B cell (primary cell): ENCODE measurements at regions of chr14 and their contacts with region 1.

Region 1: GRCh38 chr14:35140718-35141581 is 18.6 kb downstream of the PRORP start:
- DNase-seq: peak; percentile 29
- ATAC-seq: peak; percentile 41
- H3K4me3 ChIP-seq: no peak overlapping the region
- H3K4me3 Mint-ChIP-seq: no peak overlapping the region
- H3K27ac ChIP-seq: no peak overlapping the region
- H3K27ac Mint-ChIP-seq: no peak overlapping the region
- H3K4me1 ChIP-seq: no peaks in the 10 kb centered on the region
- H3K4me1 Mint-ChIP-seq: no peaks in the 10 kb centered on the region
- H3K27me3 ChIP-seq: no peaks in the 10 kb centered on the region
- H3K27me3 Mint-ChIP-seq: no peaks in the 10 kb centered on the region
- CTCF ChIP-seq: peak; percentile 80

Region 2: GRCh38 chr14:35159742-35160409 is 18.9 kb after region 1 on chr14:
- CTCF ChIA-PET with region 1: interaction called, 15 read pairs
- POLR2A ChIA-PET with region 1: no interaction called
- intact Hi-C with region 1: no loop called
- DNase-seq: no peak
- ATAC-seq: no peak
- H3K4me3 ChIP-seq: no peak overlapping the region
- H3K4me3 Mint-ChIP-seq: no peak overlapping the region
- H3K27ac ChIP-seq: no peak overlapping the region
- H3K27ac Mint-ChIP-seq: no peak overlapping the region
- H3K4me1 ChIP-seq: peaks cover 5 to 9% of the 10 kb centered on the region in 2 donors
- H3K4me1 Mint-ChIP-seq: peaks cover 28% of the 10 kb centered on the region
- H3K27me3 ChIP-seq: no peaks in the 10 kb centered on the region
- H3K27me3 Mint-ChIP-seq: no peaks in the 10 kb centered on the region
- CTCF ChIP-seq: no peak

Region 3: DNA sequence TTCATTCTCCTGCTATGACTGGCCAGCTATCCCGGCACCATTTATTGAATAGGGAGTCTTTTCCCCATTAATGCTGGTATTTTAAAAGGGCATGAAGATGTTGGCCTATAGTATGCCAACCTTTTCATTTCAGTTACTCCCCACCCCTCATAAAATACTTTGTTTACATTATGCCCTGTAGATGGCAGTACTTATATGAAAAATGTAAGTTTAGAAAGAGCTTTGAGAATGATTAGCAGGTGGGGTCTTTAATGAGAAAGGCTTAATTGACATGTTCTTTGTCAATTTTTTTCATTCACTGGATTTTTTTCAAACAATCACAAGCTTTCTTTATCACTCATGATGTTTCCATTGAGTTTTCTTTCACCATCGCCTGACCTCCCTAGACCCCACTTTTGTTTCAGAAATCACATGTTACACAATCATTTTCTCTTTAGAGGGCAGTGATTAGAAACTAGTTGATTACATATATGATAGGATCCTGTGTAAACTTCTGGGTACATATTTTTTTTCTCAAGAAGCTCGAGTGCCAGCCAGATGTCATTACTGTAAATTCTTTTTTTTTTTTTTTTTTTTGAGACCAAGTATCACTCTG is 88.6 kb after region 1 on chr14:
- CTCF ChIA-PET with region 1: interaction called, 34 read pairs
- POLR2A ChIA-PET with region 1: no interaction called
- intact Hi-C with region 1: loop called (anchors 1 kb)
- DNase-seq: peak; percentile 57
- ATAC-seq: peak; percentile 36
- H3K4me3 ChIP-seq: no peak overlapping the region
- H3K4me3 Mint-ChIP-seq: no peak overlapping the region
- H3K27ac ChIP-seq: no peak overlapping the region
- H3K27ac Mint-ChIP-seq: no peak overlapping the region
- H3K4me1 ChIP-seq: no peaks in the 10 kb centered on the region
- H3K4me1 Mint-ChIP-seq: no peaks in the 10 kb centered on the region
- H3K27me3 ChIP-seq: no peaks in the 10 kb centered on the region
- H3K27me3 Mint-ChIP-seq: no peaks in the 10 kb centered on the region
- CTCF ChIP-seq: peak; percentile 67

Region 4: DNA sequence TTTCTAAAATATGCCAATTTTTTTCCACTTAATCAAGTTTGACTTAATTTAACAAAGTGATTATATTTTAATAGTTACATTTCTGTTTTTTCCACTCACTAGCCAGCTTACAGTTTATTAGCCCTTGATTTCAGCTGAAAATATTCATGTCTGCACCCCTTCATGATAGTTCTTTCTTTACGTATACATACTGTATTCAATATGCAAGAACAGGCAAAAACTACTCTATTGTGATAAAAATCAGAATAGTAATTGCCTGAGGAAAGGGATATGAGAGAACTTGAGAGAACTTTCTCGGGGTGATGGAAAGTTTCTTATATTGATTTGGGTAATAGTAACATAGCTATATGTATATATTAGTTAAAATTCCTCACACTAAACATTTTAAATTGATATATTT is 133.9 kb after region 1 on chr14:
- CTCF ChIA-PET with region 1: no interaction called
- POLR2A ChIA-PET with region 1: no interaction called
- intact Hi-C with region 1: no loop called
- DNase-seq: no peak
- ATAC-seq: no peak
- H3K4me3 ChIP-seq: no peak overlapping the region
- H3K4me3 Mint-ChIP-seq: no peak overlapping the region
- H3K27ac ChIP-seq: no peak overlapping the region
- H3K27ac Mint-ChIP-seq: no peak overlapping the region
- H3K4me1 ChIP-seq: no peaks in the 10 kb centered on the region
- H3K4me1 Mint-ChIP-seq: no peaks in the 10 kb centered on the region
- H3K27me3 ChIP-seq: no peaks in the 10 kb centered on the region
- H3K27me3 Mint-ChIP-seq: peaks cover 3% of the 10 kb centered on the region
- CTCF ChIP-seq: no peak

Region 5: GRCh38 chr14:35365130-35366055 is 224.4 kb after region 1 on chr14:
- CTCF ChIA-PET with region 1: no interaction called
- POLR2A ChIA-PET with region 1: no interaction called
- intact Hi-C with region 1: no loop called
- DNase-seq: no peak
- ATAC-seq: no peak
- H3K4me3 ChIP-seq: no peak overlapping the region
- H3K4me3 Mint-ChIP-seq: no peak overlapping the region
- H3K27ac ChIP-seq: no peak overlapping the region
- H3K27ac Mint-ChIP-seq: no peak overlapping the region
- H3K4me1 ChIP-seq: peaks cover 26% of the 10 kb centered on the region in 2 donors
- H3K4me1 Mint-ChIP-seq: peaks cover 29% of the 10 kb centered on the region
- H3K27me3 ChIP-seq: no peaks in the 10 kb centered on the region
- H3K27me3 Mint-ChIP-seq: no peaks in the 10 kb centered on the region
- CTCF ChIP-seq: no peak

Region 6: DNA sequence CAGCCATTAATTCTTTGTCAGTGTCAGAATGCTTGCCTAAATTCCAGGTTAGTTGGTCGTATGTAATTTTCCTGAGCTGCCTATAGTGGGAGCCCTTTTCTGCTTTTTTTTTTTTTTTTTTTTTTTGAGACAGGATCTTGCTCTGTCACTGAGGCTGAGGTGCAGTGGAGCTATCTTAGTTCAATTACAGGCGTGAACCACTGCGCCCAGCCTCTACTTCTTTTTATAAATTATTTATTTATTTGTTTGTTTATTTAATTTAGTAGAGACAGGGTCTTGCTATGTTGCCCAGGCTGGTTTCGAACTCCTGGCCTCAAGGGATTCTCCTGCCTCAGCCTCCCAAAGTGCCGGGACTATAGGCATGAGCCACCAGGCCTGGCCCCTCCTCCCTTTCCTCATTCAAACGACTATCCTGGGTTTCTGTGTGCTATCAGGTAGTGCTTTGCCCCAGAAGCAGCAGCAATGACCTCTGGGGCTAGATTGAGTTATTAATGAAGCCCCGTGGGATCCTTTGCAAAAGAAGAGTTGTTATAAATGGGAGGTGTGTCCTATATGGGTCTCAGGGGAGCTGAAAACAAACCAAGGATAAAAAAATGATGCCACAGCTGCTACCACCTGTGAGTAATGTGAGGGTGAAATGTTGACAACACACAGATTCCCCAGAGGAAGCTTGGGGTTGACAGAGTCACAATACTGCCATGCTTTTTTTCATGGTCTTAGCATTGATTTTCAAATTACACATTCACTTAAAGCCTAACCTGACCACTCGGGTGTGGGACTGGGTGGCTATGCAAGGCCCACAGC is 298.2 kb after region 1 on chr14:
- CTCF ChIA-PET with region 1: interaction called, 14 read pairs
- POLR2A ChIA-PET with region 1: no interaction called
- intact Hi-C with region 1: no loop called
- DNase-seq: peak; percentile 13
- ATAC-seq: peak; percentile 87
- H3K4me3 ChIP-seq: no peak overlapping the region
- H3K4me3 Mint-ChIP-seq: no peak overlapping the region
- H3K27ac ChIP-seq: no peak overlapping the region
- H3K27ac Mint-ChIP-seq: no peak overlapping the region
- H3K4me1 ChIP-seq: peaks cover 6 to 7% of the 10 kb centered on the region in 2 donors
- H3K4me1 Mint-ChIP-seq: peaks cover 10% of the 10 kb centered on the region
- H3K27me3 ChIP-seq: no peaks in the 10 kb centered on the region
- H3K27me3 Mint-ChIP-seq: peaks cover 3% of the 10 kb centered on the region
- CTCF ChIP-seq: peak; percentile 54

Region 7: GRCh38 chr14:35687335-35687939 is 546.5 kb after region 1 on chr14:
- CTCF ChIA-PET with region 1: interaction called, 28 read pairs
- POLR2A ChIA-PET with region 1: no interaction called
- intact Hi-C with region 1: loop called (anchors 1 kb)
- DNase-seq: peak; percentile 30
- ATAC-seq: peak; percentile 51
- H3K4me3 ChIP-seq: no peak overlapping the region
- H3K4me3 Mint-ChIP-seq: no peak overlapping the region
- H3K27ac ChIP-seq: no peak overlapping the region
- H3K27ac Mint-ChIP-seq: no peak overlapping the region
- H3K4me1 ChIP-seq: peaks cover 0 to 3% of the 10 kb centered on the region in 2 donors
- H3K4me1 Mint-ChIP-seq: peaks cover 6% of the 10 kb centered on the region
- H3K27me3 ChIP-seq: no peaks in the 10 kb centered on the region
- H3K27me3 Mint-ChIP-seq: no peaks in the 10 kb centered on the region
- CTCF ChIP-seq: peak; percentile 83

Region 8: GRCh38 chr14:35814371-35815005 is 673.5 kb after region 1 on chr14:
- CTCF ChIA-PET with region 1: interaction called, 5 read pairs
- POLR2A ChIA-PET with region 1: interaction called, 7 read pairs
- intact Hi-C with region 1: loop called (anchors 1 kb)
- DNase-seq: peak; percentile 76
- ATAC-seq: peak; percentile 95
- H3K4me3 ChIP-seq: no peak overlapping the region
- H3K4me3 Mint-ChIP-seq: no peak overlapping the region
- H3K27ac ChIP-seq: no peak overlapping the region
- H3K27ac Mint-ChIP-seq: no peak overlapping the region
- H3K4me1 ChIP-seq: no peaks in the 10 kb centered on the region
- H3K4me1 Mint-ChIP-seq: peaks cover 2% of the 10 kb centered on the region
- H3K27me3 ChIP-seq: no peaks in the 10 kb centered on the region
- H3K27me3 Mint-ChIP-seq: no peaks in the 10 kb centered on the region
- CTCF ChIP-seq: peak; percentile 82